Activated T-helper 2 cell treated with anti-CD3 and anti-CD28 coated beads, Interferon-gamma antibody, Interleukin-2, Interleukin-4, amounts not matched to agents 10 μg/mL and 5 μg/mL and 100 μg/mL, durations not matched to agents 14 hours and 24 hours and 36 hours (primary cell): ENCODE measurements at regions of chr9 and their contacts with region 1.

Region 1: DNA sequence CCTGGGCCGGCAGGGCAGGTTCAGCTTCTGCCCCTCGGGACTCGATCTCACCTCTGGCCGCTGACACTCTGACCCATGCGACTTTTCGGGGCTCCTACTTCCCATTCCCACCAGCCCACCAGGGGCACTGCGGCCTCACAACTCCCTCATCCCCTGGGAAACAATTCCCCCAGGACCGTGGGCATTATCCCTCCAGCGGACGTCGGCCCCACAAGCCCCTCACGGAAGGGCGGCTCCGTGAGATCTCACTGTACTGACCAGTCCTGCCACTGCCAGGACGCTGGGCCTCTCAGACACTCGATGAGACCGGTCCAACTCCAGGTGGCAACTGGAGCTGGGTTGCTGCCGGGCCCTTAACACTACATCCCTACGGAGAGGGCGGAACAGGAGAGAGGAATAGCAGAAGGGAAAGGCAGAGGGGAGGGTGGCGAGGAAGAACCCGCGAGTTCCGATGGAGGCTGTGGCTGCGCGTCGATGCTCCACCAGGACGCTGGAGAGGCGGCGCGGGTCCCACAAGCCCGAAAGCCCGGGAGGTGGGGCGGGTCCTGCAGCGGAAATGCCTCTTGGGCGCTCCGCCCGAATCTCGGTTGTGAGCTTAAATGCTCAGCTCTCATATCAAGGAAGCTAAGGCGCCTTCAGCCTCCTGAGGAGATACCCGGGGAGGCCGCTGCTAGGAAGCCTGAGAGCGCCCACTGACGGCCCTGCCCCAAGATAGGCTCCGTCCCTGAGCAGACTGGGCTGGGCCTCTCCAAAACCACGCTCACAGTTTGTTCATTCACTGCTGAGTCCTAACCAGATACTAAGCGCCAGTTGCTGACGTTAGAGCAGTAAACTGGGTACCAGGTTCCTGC is 36.3 kb downstream of the VCP start:
- DNase-seq: peak; percentile 56
- H3K4me3 Mint-ChIP-seq: peak overlapping the region; percentile 63
- H3K27ac Mint-ChIP-seq: peak overlapping the region; percentile 70
- H3K4me1 Mint-ChIP-seq: peaks cover 5% of the 10 kb centered on the region
- H3K27me3 Mint-ChIP-seq: no peaks in the 10 kb centered on the region

Region 2: DNA sequence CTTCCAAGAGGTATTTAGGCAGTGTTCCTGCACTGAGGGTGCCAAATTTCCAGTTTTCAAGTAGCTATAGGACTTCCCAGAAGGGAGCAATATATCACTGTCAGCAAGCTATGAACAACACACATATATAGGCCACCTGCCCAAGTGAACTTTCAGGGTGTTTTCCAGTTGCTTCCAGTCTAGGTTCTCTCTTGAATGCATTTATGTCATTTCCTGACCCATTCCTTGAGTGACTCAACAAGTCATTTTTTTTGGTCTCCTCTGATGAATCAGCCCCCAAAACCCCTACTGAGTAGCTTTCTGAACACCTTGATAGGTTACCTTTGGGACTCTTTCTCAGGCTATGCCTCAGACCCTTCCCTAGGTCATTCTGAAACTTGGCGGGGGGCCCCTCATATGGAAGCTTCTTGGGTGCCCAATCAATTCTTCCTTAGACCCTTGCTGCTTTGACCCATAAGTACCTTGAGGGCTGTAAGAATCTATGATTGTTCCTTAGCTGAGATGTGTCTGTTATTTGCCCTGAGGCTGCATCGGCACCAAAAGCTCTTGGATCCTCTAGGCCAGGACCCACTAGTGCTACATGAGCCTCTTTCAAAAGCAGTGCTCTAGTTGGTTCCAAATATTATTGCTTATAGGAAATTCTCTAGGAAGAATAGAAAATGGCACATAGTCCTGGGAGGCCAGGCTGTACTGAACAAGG is 34.1 kb before region 1 on chr9:
- intact Hi-C with region 1: loop called (anchors 5 kb)
- DNase-seq: no peak
- H3K4me3 Mint-ChIP-seq: no peak overlapping the region
- H3K27ac Mint-ChIP-seq: peak overlapping the region; percentile 58
- H3K4me1 Mint-ChIP-seq: peaks cover 34% of the 10 kb centered on the region
- H3K27me3 Mint-ChIP-seq: no peaks in the 10 kb centered on the region